ENCODE measurements at regions of chr3 and their contacts with region 1.

Region 1: DNA sequence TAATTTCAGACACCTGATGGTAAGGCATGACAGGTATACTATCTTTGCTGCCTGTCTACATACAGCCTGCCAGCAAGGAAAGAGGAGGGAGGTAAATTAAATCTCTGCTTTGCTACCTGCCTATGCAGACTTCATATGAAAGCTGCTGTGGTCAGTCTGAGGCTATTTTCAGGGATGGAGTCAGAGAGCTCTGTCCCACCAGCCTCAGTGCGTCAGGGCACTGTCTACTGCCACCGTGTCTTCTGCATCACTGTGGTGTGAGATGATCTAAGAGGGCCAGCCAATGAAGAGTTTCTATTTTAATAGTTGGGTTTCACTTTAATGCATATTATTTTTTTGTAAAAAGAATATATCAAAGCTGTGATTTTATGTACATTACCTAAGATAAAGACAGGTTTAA is 125.6 kb downstream of the CADPS start:
- DNase-seq: no peak
- ATAC-seq: no peak

Region 2: DNA sequence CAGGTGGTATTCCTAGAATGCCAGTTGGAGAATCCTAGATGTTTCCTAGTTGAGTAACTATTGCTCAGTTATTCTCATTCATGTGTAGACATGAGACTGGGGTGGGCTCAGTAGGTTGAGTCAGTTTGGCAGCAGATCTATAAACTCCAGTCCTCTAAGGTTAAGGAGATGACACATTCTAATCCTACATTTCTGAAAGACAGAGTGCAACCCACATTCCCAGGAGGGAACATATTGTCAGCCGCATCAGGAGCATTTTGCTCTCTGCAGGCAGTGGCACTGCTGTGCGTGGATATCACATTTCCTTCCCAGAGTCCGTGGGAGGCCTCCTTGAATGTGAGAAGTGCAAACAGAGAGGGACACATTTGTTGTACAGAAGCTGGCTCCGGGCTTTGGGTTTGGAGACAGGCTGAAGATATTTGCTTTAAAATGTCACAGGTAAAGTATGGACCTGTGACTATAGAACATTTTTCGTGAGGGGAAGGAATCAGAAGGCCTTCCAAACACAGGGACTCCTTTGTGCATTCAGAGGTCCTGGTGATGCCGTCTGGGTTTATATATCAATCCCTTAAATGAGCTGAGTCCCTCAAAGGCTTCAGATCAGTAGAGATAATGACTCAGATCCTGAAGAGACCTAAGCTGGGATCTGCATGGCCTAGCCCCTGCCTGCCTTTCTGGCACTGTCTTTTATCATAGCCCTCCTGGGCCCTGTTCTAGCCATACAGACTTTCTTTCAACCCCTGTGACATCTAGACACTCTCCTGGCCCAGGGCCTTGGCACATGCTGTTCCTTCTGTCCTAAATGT is 30.9 kb before region 1 on chr3:
- intact Hi-C with region 1: loop called (anchors 1 kb)
- DNase-seq: no peak
- ATAC-seq: no peak

Region 3: DNA sequence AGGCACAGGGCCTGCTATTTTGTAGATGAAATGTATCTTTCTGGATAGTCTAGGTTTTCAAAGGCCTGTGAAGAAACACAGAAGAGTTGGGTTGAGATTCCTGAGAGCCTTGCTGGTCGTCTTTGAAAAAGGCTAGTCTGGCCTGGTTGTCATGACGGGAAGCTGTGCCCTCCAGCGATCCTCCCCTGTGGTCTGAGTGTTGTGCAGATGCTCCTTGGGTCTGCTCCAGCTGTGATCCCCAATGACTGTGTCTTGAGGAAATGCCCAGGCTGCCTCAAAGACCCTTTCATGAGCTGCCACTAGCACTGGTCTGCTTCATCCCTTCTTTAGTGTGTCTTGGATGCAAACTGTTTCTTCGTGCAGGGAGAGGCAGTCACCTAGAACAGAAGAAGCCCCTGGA is 417.5 kb after region 1 on chr3:
- intact Hi-C with region 1: no loop called
- DNase-seq: no peak
- ATAC-seq: no peak

Measured in sciatic nerve (tissue), 2 donors.